ENCODE measurements at regions of chr7 and their contacts with region 1.

Region 1: DNA sequence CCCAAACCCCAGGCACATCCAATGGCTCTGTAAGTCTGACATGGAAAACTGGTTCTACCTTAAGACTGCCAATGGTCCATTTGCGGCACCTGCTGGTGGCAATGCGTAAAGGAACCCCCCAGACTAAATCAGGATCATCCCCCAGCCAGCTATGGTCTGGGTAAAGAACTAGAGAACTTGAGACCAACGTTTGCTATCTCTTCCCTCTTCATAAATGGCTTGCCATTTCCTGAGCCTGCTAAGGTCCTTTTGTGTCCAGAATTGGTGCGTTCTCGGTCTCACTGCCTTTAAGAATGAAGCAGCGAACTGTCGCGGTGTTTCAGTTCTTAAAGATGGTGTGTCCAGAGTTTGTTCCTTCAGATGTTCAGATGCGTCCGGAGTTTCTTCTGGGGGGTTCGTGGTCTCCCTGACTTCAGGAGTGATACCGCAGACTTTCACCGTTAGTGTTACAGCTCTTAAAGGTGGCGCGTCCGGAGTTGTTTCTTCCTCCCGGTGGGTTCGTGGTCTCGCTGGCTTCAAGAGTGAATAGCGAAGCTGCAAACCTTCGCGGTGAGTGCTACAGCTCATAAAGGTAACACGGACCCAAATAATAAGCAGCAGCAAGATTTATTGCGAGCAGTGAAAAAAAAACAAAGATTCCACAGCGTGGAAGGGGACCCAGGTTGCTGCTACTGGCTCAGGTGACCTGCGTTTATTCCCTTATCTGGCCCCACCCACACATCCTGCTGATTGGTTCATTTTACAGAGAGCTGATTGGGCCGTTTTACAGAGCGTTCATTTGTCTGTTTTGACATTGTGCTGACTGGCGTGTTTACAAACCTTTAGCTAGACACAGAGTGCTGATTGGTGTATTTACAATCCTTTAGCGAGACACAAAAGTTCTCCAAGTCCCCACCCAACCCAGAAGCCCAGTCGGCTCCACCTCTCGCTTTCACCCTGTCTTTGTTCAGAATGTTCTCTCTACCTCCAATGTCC is 95.4 kb downstream of the ELMO1 start:
- DNase-seq: peak; percentile 79 to 91 (median 83)
- H3K4me3 ChIP-seq: peak overlapping the region; percentile 78 to 91
- H3K4me3 Mint-ChIP-seq: peak overlapping the region; percentile 93 to 97 (median 96)
- H3K27ac ChIP-seq: peak overlapping the region; percentile 73
- H3K27ac Mint-ChIP-seq: peak overlapping the region; percentile 82 to 98 (median 94)
- H3K4me1 ChIP-seq: peaks cover 71% of the 10 kb centered on the region
- H3K4me1 Mint-ChIP-seq: peaks cover 69 to 96% (median 84%) of the 10 kb centered on the region in 4 donors
- H3K27me3 ChIP-seq: no peaks in the 10 kb centered on the region
- H3K27me3 Mint-ChIP-seq: no peaks in the 10 kb centered on the region

Region 2: GRCh38 chr7:35906191-35906908 is 1446.9 kb before region 1 on chr7:
- CTCF ChIA-PET with region 1: no interaction called
- POLR2A ChIA-PET with region 1: no interaction called
- intact Hi-C with region 1: no loop called
- DNase-seq: peak; percentile 70 to 78 (median 73)
- H3K4me3 ChIP-seq: no peak overlapping the region
- H3K4me3 Mint-ChIP-seq: no peak overlapping the region
- H3K27ac ChIP-seq: no peak overlapping the region
- H3K27ac Mint-ChIP-seq: peak overlapping the region in 5 of 7 donors; percentile 2 to 69 (median 36)
- H3K4me1 ChIP-seq: no peaks in the 10 kb centered on the region
- H3K4me1 Mint-ChIP-seq: peaks cover 0 to 6% (median 3%) of the 10 kb centered on the region in 4 donors
- H3K27me3 ChIP-seq: no peaks in the 10 kb centered on the region
- H3K27me3 Mint-ChIP-seq: no peaks in the 10 kb centered on the region

Region 3: DNA sequence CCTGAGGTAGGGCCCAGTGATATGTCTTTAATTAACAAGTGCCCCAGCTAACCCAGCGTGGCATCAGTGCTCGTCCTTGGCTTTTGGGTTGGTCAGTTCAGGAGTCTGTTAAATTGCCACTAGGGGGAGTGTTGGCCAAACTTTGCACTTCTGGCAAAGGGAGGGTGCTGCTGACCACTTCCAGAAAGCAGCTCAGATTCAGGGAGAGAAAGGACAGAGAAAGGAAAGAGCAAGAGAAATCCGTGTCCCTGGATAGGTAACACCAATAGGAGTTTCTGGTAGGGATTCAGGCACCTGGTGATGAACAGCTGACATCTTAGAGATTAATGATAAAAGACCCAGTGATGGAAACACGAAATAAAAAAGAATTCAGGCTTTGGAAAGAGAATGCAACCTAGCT is 385.9 kb before region 1 on chr7:
- CTCF ChIA-PET with region 1: no interaction called
- POLR2A ChIA-PET with region 1: no interaction called
- intact Hi-C with region 1: no loop called
- DNase-seq: no peak
- H3K4me3 ChIP-seq: no peak overlapping the region
- H3K4me3 Mint-ChIP-seq: peak overlapping the region in 1 of 8 donors; percentile 22
- H3K27ac ChIP-seq: no peak overlapping the region
- H3K27ac Mint-ChIP-seq: peak overlapping the region in 1 of 7 donors; percentile 20
- H3K4me1 ChIP-seq: peaks cover 39% of the 10 kb centered on the region
- H3K4me1 Mint-ChIP-seq: peaks cover 42 to 65% (median 50%) of the 10 kb centered on the region in 4 donors
- H3K27me3 ChIP-seq: no peaks in the 10 kb centered on the region
- H3K27me3 Mint-ChIP-seq: no peaks in the 10 kb centered on the region

Region 4: GRCh38 chr7:36986429-36987362 is 366.6 kb before region 1 on chr7:
- CTCF ChIA-PET with region 1: interaction called, 3 read pairs
- POLR2A ChIA-PET with region 1: no interaction called
- intact Hi-C with region 1: loop called (anchors 1 kb)
- DNase-seq: peak; percentile 30 to 50 (median 41)
- H3K4me3 ChIP-seq: no peak overlapping the region
- H3K4me3 Mint-ChIP-seq: no peak overlapping the region
- H3K27ac ChIP-seq: no peak overlapping the region
- H3K27ac Mint-ChIP-seq: peak overlapping the region in 3 of 7 donors; percentile 36 to 88 (median 82)
- H3K4me1 ChIP-seq: no peaks in the 10 kb centered on the region
- H3K4me1 Mint-ChIP-seq: peaks cover 25 to 43% (median 31%) of the 10 kb centered on the region in 4 donors
- H3K27me3 ChIP-seq: no peaks in the 10 kb centered on the region
- H3K27me3 Mint-ChIP-seq: no peaks in the 10 kb centered on the region

Region 5: DNA sequence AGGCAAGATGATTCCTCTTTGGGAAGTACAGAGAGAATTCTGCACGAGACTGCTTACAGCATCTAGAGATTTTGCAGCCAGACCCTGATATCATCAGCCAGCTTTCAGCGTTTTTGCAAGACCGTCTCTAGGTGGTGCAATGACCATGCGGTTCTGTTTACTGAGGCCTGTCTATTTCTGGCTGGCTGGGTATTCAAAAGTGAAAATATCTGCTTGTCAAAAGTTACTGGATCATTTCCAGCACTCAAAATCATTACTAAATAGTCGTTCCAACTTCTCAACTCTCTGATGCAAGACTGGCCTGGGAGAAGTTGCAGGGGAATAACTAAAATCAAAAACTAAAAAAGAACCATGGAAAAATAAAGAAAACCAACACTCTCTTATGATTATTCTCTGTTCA is 144.7 kb before region 1 on chr7:
- CTCF ChIA-PET with region 1: interaction called, 17 read pairs
- POLR2A ChIA-PET with region 1: no interaction called
- intact Hi-C with region 1: loop called (anchors 1 kb)
- DNase-seq: peak in 4 of 5 donors; percentile 15 to 38 (median 32)
- H3K4me3 ChIP-seq: no peak overlapping the region
- H3K4me3 Mint-ChIP-seq: no peak overlapping the region
- H3K27ac ChIP-seq: no peak overlapping the region
- H3K27ac Mint-ChIP-seq: peak overlapping the region; percentile 22 to 84 (median 64)
- H3K4me1 ChIP-seq: no peaks in the 10 kb centered on the region
- H3K4me1 Mint-ChIP-seq: peaks cover 0 to 3% (median under 1%) of the 10 kb centered on the region in 4 donors
- H3K27me3 ChIP-seq: no peaks in the 10 kb centered on the region
- H3K27me3 Mint-ChIP-seq: no peaks in the 10 kb centered on the region

Region 6: GRCh38 chr7:37284805-37285231 is 68.4 kb before region 1 on chr7:
- CTCF ChIA-PET with region 1: interaction called, 117 read pairs
- POLR2A ChIA-PET with region 1: interaction called, 21 read pairs
- intact Hi-C with region 1: loop called (anchors 1 kb)
- DNase-seq: peak in 4 of 5 donors; percentile 17 to 43 (median 28)
- H3K4me3 ChIP-seq: no peak overlapping the region
- H3K4me3 Mint-ChIP-seq: no peak overlapping the region
- H3K27ac ChIP-seq: no peak overlapping the region
- H3K27ac Mint-ChIP-seq: peak overlapping the region in 5 of 7 donors; percentile 47 to 81 (median 71)
- H3K4me1 ChIP-seq: peaks cover 28% of the 10 kb centered on the region
- H3K4me1 Mint-ChIP-seq: peaks cover 38 to 57% (median 51%) of the 10 kb centered on the region in 4 donors
- H3K27me3 ChIP-seq: no peaks in the 10 kb centered on the region
- H3K27me3 Mint-ChIP-seq: no peaks in the 10 kb centered on the region

Region 7: GRCh38 chr7:37408291-37409228 is 55.3 kb after region 1 on chr7:
- CTCF ChIA-PET with region 1: interaction called, 3 read pairs
- POLR2A ChIA-PET with region 1: interaction called, 5 read pairs
- intact Hi-C with region 1: loop called (anchors 2 kb)
- DNase-seq: peak in 4 of 5 donors; percentile 22 to 67 (median 30)
- H3K4me3 ChIP-seq: peak overlapping the region in 1 of 2 donors; percentile 45
- H3K4me3 Mint-ChIP-seq: peak overlapping the region; percentile 82 to 92 (median 88)
- H3K27ac ChIP-seq: peak overlapping the region; percentile 46
- H3K27ac Mint-ChIP-seq: peak overlapping the region; percentile 86 to 94 (median 92)
- H3K4me1 ChIP-seq: peaks cover 48% of the 10 kb centered on the region
- H3K4me1 Mint-ChIP-seq: peaks cover 48 to 77% (median 62%) of the 10 kb centered on the region in 4 donors
- H3K27me3 ChIP-seq: no peaks in the 10 kb centered on the region
- H3K27me3 Mint-ChIP-seq: no peaks in the 10 kb centered on the region